HEK293T (cell line): ENCODE measurements at regions of chr13 and their contacts with region 1.

Region 1: GRCh38 chr13:64127856-64128255 is 2712.2 kb upstream of the PCDH20 start:
- DNase-seq: no peak

Region 2: DNA sequence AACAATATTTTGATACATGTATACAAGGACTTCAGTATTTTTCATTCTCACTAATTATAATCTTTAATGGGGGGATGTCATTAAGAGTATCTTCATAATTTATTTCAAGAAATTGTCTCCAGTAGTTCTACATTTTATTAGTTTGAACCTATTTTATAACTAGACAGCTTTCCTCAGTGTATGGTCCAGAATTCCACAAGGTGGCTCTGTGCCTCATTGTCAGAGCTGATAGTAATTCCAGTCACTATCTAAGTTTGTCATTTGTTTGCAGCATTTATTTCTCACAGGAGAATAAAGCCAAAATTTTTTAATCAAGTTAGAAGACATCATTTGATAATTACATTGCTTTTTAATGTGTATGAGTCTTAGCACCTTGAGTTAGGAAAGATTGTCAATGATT is 1079.2 kb before region 1 on chr13:
- CTCF ChIA-PET with region 1: interaction called, 16 read pairs
- POLR2A ChIA-PET with region 1: no interaction called
- DNase-seq: peak; percentile 32

Region 3: GRCh38 chr13:64263285-64263684 is 135.4 kb after region 1 on chr13:
- CTCF ChIA-PET with region 1: no interaction called
- POLR2A ChIA-PET with region 1: no interaction called
- DNase-seq: no peak

Region 4: GRCh38 chr13:64332048-64332447 is 204.2 kb after region 1 on chr13:
- CTCF ChIA-PET with region 1: no interaction called
- POLR2A ChIA-PET with region 1: no interaction called
- DNase-seq: no peak